ENCODE measurements at regions of chr7 and their contacts with region 1.

Region 1: GRCh38 chr7:105769901-105770628 is 106.3 kb downstream of the ATXN7L1 start:
- H3K4me3 ChIP-seq: no peak overlapping the region
- H3K27ac ChIP-seq: no peak overlapping the region
- H3K4me1 ChIP-seq: no peaks in the 10 kb centered on the region
- CTCF ChIP-seq: no peak

Region 2: DNA sequence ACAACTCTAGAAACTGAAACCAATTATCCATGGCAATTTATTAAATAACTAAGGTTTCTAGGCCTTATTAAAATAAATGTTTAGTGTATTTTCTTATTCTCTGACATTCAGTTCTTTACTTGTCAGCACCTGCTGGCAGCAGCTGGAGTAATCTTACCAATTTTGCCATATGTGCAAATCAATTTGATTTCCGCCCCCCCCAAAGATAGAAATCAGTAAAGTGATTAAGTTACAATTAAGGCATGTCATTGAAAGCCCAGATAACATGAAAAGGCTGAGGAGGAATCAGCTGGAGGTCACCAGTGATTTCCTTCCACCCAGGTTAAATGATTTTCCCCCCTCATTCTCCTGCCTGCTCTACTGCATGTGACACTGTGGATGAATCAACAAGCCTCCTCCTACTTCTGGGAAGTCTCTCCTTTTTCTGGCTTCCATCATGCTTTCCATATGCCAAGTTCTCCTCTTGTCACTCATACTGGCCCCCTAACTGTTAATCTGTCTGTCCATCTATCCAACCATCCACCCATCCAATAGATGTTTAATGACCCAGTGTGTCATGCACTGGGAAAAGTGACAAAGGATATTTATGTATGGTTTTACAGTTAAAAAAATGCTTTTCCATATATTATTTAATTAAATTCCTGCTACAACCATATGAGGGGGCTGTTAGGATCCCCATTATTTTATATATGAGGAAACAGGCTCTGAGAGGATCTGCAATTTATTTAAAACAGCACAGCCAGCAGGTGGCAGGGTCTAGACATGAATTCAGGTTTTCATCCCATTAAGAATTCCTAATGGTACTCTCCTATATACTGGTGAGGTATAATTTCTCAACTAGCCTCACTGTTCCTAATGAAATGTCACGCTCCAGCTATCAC is 10.2 kb before region 1 on chr7:
- CTCF ChIA-PET with region 1: interaction called, 11 read pairs
- POLR2A ChIA-PET with region 1: no interaction called
- H3K4me3 ChIP-seq: no peak overlapping the region
- H3K27ac ChIP-seq: no peak overlapping the region
- H3K4me1 ChIP-seq: no peaks in the 10 kb centered on the region
- CTCF ChIP-seq: peak; percentile 27; the same call in 1 of the 2 replicates

Region 3: DNA sequence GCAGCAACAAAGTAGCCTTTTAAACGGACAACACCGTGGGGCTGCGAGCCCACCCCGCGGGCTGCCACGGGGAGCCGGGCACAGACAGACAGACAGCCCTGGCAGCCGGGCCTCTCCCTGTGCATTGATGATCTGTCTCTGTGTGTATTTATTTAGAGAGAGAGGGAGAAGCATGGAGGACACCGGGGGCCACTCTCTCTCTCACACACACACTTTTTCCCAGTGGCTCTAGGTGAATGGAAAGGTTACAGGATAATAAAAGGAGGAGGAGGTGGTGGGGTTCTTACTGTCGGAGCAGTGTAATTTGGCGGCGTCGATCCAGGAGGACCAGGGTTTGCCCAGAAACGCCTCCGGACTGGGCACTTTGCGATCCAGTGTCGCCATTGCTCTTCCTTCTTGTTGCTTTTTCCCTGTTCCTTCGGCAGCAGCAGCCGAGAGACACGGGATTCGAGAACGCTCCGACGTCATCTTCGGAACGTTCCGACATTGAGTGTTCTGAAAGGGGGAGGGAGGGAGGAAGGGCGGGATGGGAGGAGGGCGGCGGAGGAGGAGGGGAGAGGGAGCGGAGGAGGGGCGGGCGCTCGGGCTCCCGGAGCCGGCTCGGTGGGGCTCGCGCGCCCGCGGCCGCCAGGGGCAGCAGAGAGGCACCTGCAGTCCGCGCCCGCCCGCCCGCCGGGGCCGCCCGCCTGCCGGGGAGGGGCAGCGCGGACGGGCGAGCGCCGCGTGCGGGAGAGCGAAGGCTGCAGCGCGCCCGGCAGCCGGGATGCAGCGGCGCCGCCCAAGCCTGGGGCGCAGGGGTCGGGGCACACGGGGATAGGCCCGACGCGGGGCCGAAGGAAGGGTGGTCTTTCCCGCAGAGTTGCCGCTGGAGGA is 106.3 kb after region 1 on chr7 and contains the start of gene ATXN7L1:
- CTCF ChIA-PET with region 1: interaction called, 19 read pairs
- POLR2A ChIA-PET with region 1: no interaction called
- H3K4me3 ChIP-seq: peak within 1 kb of the TSS; percentile 89
- H3K27ac ChIP-seq: peak within 1 kb of the TSS; percentile 62
- H3K4me1 ChIP-seq: peaks cover 5% of the 10 kb centered on the region
- CTCF ChIP-seq: no peak

Region 4: GRCh38 chr7:106031300-106032035 is 261.4 kb after region 1 on chr7:
- CTCF ChIA-PET with region 1: interaction called, 10 read pairs
- POLR2A ChIA-PET with region 1: no interaction called
- H3K4me3 ChIP-seq: no peak overlapping the region
- H3K27ac ChIP-seq: no peak overlapping the region
- H3K4me1 ChIP-seq: no peaks in the 10 kb centered on the region
- CTCF ChIP-seq: no peak

Region 5: GRCh38 chr7:106041140-106041717 is 271.2 kb after region 1 on chr7:
- CTCF ChIA-PET with region 1: interaction called, 27 read pairs
- POLR2A ChIA-PET with region 1: no interaction called
- H3K4me3 ChIP-seq: no peak overlapping the region
- H3K27ac ChIP-seq: no peak overlapping the region
- H3K4me1 ChIP-seq: 0 out of 2 replicates have a peak, but pooled peaks cover 2% of the 10 kb centered on the region
- CTCF ChIP-seq: peak; percentile 63